Activated B cell treated with CpG ODN at 0.5 μM for 24 hours (primary cell): ENCODE measurements at regions of chr7 and their contacts with region 1.

Region 1: GRCh38 chr7:20013536-20013935 is 203.6 kb downstream of the MACC1 start:
- DNase-seq: no peak
- ATAC-seq: no peak
- H3K4me3 Mint-ChIP-seq: no peak overlapping the region
- H3K27ac Mint-ChIP-seq: no peak overlapping the region
- H3K4me1 Mint-ChIP-seq: peaks cover 9% of the 10 kb centered on the region
- H3K27me3 Mint-ChIP-seq: no peaks in the 10 kb centered on the region
- CTCF ChIP-seq: no peak

Region 2: DNA sequence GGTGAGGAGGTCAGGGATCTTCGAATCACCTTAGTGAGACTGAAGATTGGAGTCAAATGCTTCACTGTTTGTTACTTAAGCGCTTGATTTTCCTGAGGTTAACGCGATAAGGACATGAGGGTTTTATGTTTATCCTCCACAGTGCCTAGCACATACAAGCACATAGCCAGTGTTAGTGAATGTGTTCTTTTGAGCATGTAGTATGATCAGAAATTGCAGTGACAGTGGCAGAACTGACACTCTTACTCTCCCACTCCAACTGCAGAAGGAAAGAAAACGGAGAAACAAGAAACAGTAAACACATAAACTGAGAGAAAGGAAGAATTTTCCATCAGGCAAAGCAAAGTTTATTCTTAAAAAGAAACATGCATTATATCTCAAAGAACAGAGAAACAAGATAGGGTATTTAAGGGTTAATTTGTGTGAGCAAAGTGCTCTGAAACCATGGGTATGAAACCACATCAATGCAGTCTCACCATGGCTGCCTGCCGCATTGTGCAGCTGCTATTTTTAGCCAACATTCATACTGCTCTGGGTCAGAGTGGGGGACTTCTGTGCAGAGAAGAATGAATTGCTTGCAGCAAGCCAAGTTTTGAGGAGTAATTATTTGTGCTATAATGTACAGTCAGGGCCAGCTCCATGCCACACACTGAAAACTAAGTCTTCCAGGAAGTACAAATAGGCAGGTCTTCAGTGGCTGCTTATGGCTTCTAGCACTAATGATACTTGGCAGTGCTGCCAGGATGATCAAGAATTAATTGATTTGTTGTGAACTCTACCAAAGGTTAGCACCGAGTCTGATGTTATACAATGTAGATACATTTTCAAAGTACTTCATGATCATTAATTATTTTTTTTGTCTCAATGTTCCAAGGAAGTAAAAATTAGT is 51.7 kb after region 1 on chr7:
- CTCF ChIA-PET with region 1: no interaction called
- POLR2A ChIA-PET with region 1: no interaction called
- intact Hi-C with region 1: loop called (anchors 2 kb)
- DNase-seq: no peak
- ATAC-seq: peak; percentile 52
- H3K4me3 Mint-ChIP-seq: no peak overlapping the region
- H3K27ac Mint-ChIP-seq: no peak overlapping the region
- H3K4me1 Mint-ChIP-seq: peaks cover 13% of the 10 kb centered on the region
- H3K27me3 Mint-ChIP-seq: no peaks in the 10 kb centered on the region
- CTCF ChIP-seq: no peak

Region 3: GRCh38 chr7:20102982-20103381 is 89.4 kb after region 1 on chr7:
- CTCF ChIA-PET with region 1: no interaction called
- POLR2A ChIA-PET with region 1: no interaction called
- intact Hi-C with region 1: no loop called
- DNase-seq: no peak
- ATAC-seq: no peak
- H3K4me3 Mint-ChIP-seq: no peak overlapping the region
- H3K27ac Mint-ChIP-seq: no peak overlapping the region
- H3K4me1 Mint-ChIP-seq: no peaks in the 10 kb centered on the region
- H3K27me3 Mint-ChIP-seq: no peaks in the 10 kb centered on the region
- CTCF ChIP-seq: no peak